ENCODE measurements at regions of chr4 and their contacts with region 1.

Region 1: GRCh38 chr4:10018818-10019461 is 2.4 kb downstream of the SLC2A9 start:
- DNase-seq: peak; percentile 99 to 100 (median 99)
- ATAC-seq: peak; percentile 96 to 98
- H3K4me3 ChIP-seq: peak overlapping the region; percentile 35
- H3K27ac ChIP-seq: peak overlapping the region; percentile 90
- H3K4me1 ChIP-seq: peaks cover 22% of the 10 kb centered on the region
- H3K27me3 ChIP-seq: no peaks in the 10 kb centered on the region

Region 2: DNA sequence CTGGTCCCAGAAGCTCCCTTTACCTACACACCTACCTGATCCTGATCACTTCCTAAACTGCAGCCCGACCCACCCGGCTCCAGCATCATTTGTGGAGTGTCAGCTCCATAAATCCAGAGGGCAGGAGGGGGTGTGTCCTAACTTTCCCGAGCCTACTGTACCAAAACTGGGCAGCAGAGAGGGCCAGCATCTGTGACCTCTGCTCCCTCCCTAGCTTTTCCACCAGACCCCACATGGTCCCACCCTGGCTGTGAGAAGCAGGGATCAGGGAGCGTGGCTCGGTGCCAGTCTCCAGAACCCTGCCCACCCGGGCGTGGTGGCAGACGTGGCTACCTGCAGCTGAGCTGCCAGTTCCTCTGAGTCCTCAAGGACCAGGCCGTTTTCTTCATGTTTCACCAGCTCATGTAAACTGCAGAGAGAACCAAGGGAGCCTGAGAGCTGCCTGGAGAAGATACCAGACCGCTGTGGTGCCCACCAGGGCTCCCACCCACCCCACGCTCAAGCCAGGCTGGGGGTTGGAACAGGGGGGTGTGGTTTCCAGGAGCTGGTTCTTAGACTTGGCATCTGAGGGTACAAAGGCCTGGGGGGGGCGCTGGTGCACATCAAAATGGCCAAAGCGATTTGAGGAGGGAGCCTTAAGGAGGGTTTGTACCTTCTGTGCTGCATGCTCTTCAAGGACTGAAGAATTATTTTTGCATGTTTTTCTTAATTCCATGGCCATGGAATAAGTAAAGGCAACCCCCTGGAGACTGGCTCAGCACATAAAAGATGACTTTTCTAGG is 314.2 kb before region 1 on chr4:
- intact Hi-C with region 1: loop called in 1 of 4 experiments (anchors 10 kb)
- DNase-seq: no peak
- ATAC-seq: no peak
- H3K4me3 ChIP-seq: no peak overlapping the region
- H3K27ac ChIP-seq: no peak overlapping the region
- H3K4me1 ChIP-seq: no peaks in the 10 kb centered on the region
- H3K27me3 ChIP-seq: no peaks in the 10 kb centered on the region

Region 3: DNA sequence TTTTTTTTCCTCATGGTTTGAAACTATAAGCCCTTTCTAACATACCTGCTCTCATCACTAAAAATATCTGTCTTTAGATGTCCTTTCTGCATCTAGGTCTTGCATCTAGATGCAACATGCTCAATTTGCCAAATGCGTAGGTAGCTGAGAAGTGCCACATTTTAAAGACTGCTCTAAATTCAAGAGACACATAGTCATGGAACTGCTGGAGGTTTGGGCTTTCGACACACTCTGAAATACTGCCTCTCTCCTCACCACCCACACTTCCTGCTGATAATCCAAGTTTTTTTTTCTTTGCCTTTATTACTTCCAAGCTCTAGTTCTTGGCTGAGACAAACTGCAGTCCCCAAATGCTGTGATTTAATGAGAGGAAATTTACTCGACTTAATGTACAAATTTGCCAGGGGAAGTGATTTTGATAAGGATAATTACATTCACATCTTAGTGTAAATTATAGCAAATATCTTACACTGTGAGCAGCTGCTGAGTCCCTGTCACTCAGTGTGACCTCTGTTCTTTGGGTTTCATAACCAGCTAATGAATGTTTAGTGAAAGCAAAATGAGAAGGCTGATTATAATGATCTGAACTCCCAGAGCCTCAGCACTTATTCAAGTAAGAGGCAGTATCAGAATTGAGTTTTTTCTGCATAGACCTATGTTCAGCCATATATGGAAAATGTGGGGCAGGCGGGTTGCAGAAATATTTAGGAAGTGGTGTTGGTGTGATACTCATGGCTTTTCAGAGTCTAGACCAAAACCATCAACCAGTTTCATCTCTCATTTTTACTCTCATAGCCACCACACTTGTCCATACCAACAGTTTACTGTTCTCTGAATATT is 206.2 kb before region 1 on chr4:
- intact Hi-C with region 1: no loop called
- DNase-seq: no peak
- ATAC-seq: peak; percentile 52 to 57
- H3K4me3 ChIP-seq: no peak overlapping the region
- H3K27ac ChIP-seq: no peak overlapping the region
- H3K4me1 ChIP-seq: no peaks in the 10 kb centered on the region
- H3K27me3 ChIP-seq: no peaks in the 10 kb centered on the region

Region 4: DNA sequence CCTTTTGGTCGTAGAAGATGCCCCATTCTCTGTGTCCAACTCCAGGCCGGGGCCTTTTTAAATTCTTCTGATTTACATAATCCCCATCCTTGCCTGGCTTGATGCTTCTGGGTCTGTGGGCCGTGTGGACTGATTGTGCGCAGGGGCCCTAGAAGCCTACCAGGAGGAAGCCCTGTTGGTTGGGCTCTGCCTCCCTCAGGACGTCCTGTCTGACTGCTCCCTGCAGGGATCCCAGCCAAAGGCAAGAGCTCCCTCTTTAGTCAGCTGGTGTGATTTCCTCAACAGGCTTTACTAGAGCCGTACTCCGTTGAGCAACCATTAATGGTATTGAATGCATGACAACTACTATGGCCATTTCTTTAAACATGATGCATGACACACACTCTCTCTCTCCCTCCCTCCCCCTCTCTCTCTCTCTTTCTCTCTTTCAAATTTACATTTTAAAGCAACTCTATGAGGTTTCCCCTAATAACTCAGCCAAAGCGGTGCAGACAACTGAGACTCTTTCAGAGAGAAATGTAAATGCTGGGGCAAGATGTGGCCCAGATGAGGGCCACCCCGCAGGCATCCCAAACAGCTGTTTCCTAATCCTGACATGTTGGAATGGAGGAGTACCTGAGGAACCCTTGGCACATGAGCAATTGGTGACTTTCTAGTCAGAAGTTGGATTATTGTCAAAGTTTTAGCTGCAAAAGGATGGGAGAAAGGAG is 120.2 kb before region 1 on chr4:
- intact Hi-C with region 1: loop called in 3 of 4 experiments (anchors 10 kb)
- DNase-seq: peak; percentile 66 to 80 (median 79)
- ATAC-seq: peak; percentile 91 to 92
- H3K4me3 ChIP-seq: no peak overlapping the region
- H3K27ac ChIP-seq: no peak overlapping the region
- H3K4me1 ChIP-seq: no peaks in the 10 kb centered on the region
- H3K27me3 ChIP-seq: no peaks in the 10 kb centered on the region

Region 5: DNA sequence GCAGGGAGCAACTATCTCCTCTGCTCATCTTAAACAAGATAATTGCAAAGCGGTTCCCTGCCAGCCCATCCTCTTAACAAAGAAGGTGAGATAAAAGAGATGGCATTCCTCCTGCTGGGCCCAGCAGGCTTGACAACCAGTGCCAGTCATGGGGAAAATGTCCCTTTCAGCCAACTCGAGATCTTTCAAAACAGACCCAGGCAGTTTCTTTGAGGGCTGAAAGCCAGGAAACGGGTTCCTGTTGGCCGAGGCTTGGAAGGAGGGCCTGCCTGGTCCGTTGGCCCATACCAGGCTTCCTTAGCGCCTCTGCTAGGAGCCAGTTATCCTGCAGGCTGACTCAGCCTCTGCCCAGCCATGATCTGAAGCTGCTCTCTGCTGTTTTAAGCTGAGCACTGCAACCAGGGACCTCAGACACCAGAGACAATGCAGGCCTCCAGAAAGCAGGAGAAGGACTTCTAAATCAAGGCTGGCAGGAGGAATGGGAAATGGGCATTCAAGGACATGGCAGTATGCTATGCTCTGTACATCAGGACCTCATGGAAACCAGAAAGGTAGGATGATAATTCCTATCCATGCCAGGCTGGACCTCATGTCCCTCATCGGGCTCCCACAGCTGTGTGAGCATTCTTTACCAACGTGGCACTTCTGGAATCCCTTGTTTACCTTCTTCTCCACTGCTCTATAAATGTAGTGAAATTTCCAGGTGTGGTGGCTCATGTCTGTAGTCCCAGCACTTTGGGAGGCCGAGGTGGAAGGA is 44.8 kb after region 1 on chr4:
- intact Hi-C with region 1: loop called in 3 of 4 experiments (anchors 2 to 10 kb)
- DNase-seq: peak; percentile 82 to 89 (median 86)
- ATAC-seq: peak; percentile 97 to 98
- H3K4me3 ChIP-seq: no peak overlapping the region
- H3K27ac ChIP-seq: peak overlapping the region; percentile 11
- H3K4me1 ChIP-seq: peaks cover 5% of the 10 kb centered on the region
- H3K27me3 ChIP-seq: no peaks in the 10 kb centered on the region